HCT116 (cell line): ENCODE measurements at regions of chr19 and their contacts with region 1.

Region 1: GRCh38 chr19:3102228-3103140 is 8.3 kb downstream of the GNA11 start:
- DNase-seq: no peak
- ATAC-seq: no peak
- H3K4me3 ChIP-seq: no peak overlapping the region
- H3K27ac ChIP-seq: no peak overlapping the region
- H3K4me1 ChIP-seq: peaks cover 7 to 13% of the 10 kb centered on the region in 2 experiments
- H3K27me3 ChIP-seq: no peaks in the 10 kb centered on the region
- CTCF ChIP-seq: no peak
- POLR2A ChIP-seq: no peak
- RAD21 ChIP-seq: no peak

Region 2: GRCh38 chr19:2962045-2962561 is 140.4 kb before region 1 on chr19:
- CTCF ChIA-PET with region 1: interaction called, 19 read pairs
- POLR2A ChIA-PET with region 1: no interaction called
- RAD21 ChIA-PET with region 1: interaction called, 4 to 6 read pairs
- intact Hi-C with region 1: loop called (anchors 2 kb)
- DNase-seq: peak; percentile 68
- ATAC-seq: peak; percentile 70
- H3K4me3 ChIP-seq: no peak overlapping the region
- H3K27ac ChIP-seq: no peak overlapping the region
- H3K4me1 ChIP-seq: no peaks in the 10 kb centered on the region; a peak in 1 of 4 replicates
- H3K27me3 ChIP-seq: no peaks in the 10 kb centered on the region
- CTCF ChIP-seq: peak; percentile 53 to 85 (median 77)
- POLR2A ChIP-seq: no peak
- RAD21 ChIP-seq: peak; percentile 92

Region 3: DNA sequence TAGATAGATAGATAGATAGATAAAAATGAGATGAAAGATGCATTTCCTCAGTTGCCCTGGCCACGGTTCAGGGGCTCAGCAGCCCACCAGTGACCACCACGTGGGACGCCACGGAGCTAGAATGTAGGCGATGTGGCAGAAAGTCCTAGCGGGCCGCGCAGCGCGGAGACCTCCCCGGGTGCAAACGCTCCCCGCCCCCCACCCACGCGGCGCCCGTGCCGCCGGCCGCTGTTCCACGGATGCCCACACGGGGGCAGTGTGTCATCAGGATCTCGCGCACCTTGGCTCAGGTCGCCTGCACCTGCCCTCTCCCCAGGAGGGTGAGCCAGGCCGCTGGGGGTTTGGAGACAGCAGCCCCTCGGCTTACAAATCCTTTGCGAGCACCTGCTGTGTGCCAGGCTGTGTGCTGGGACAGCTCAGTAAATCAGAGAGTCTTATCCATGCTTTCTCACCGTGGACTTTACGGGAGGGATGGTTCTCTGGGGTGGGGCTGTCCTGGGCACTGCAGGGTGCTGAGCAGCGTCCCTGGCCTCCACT is 26.5 kb before region 1 on chr19:
- CTCF ChIA-PET with region 1: interaction called, 32 read pairs
- POLR2A ChIA-PET with region 1: no interaction called
- RAD21 ChIA-PET with region 1: interaction called, 3 to 4 read pairs
- intact Hi-C with region 1: no loop called
- DNase-seq: no peak
- ATAC-seq: peak; percentile 84
- H3K4me3 ChIP-seq: peak overlapping the region in 1 of 2 experiments; percentile 18; a peak in 2 of 4 replicates
- H3K27ac ChIP-seq: no peak overlapping the region
- H3K4me1 ChIP-seq: peaks cover 30 to 49% of the 10 kb centered on the region in 2 experiments
- H3K27me3 ChIP-seq: no peaks in the 10 kb centered on the region
- CTCF ChIP-seq: peak; percentile 89 to 91 (median 89)
- POLR2A ChIP-seq: no peak
- RAD21 ChIP-seq: peak; percentile 88